H1 (cell line): ENCODE measurements at regions of chr10 and their contacts with region 1.

Region 1: GRCh38 chr10:95374597-95375209 is 83.9 kb upstream of the PDLIM1 start:
- DNase-seq: peak; percentile 56 to 85
- H3K4me3 ChIP-seq: no peak overlapping the region
- H3K27ac ChIP-seq: no peak overlapping the region
- H3K4me1 ChIP-seq: peaks cover 0 to 5% (median 4%) of the 10 kb centered on the region in 4 experiments; a peak in 4 of 7 replicates
- H3K27me3 ChIP-seq: no peaks in the 10 kb centered on the region
- CTCF ChIP-seq: peak; percentile 91 to 100 (median 100)
- EP300 ChIP-seq: no peak
- POLR2A ChIP-seq: no peak
- RAD21 ChIP-seq: peak; percentile 96 to 99

Region 2: DNA sequence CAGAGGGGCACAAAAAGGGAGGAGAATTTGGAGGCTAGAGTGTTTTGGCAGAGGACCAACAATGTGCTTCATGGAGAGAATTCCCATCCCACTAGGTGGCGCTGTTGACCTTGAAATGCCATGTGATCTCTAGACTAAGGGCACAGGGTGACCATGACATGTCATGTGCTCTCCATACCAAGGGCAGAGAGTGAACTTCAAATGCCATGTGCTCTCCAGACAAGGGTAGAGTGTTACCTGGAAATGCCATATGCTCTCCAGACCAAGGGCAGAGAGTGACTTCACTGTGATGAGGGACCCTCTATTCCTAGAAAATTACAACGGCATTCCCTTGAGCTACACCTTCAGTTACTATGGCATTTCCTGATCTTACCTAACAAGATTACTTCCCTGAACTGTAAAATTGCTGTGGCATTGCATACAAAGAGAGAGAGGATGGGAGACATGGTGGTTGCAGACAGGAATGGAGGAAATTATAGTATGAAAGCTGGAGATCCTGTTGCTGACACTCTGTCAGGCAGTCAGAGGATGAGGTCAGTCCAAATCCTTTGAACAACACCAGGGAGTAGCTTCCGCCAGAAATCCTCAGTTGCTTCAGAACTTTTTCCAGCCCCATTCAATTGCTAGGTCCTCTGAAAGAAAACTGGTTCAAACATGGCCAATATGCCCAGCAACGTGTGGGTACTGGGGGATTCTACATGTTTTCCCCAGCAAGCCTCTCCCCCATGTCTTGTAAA is 241.5 kb before region 1 on chr10:
- CTCF ChIA-PET with region 1: interaction called, 11 read pairs
- POLR2A ChIA-PET with region 1: no interaction called
- DNase-seq: peak; percentile 67 to 95
- H3K4me3 ChIP-seq: no peak overlapping the region
- H3K27ac ChIP-seq: no peak overlapping the region
- H3K4me1 ChIP-seq: no peaks in the 10 kb centered on the region
- H3K27me3 ChIP-seq: no peaks in the 10 kb centered on the region
- CTCF ChIP-seq: peak; percentile 59 to 98 (median 83)
- EP300 ChIP-seq: no peak
- POLR2A ChIP-seq: no peak
- RAD21 ChIP-seq: peak; percentile 98

Region 3: GRCh38 chr10:95363303-95363912 is 11.3 kb before region 1 on chr10:
- CTCF ChIA-PET with region 1: interaction called, 149 read pairs
- POLR2A ChIA-PET with region 1: no interaction called
- DNase-seq: no peak
- H3K4me3 ChIP-seq: no peak overlapping the region
- H3K27ac ChIP-seq: no peak overlapping the region
- H3K4me1 ChIP-seq: peaks cover 0 to 3% (median 0%) of the 10 kb centered on the region in 4 experiments; a peak in 2 of 7 replicates
- H3K27me3 ChIP-seq: no peaks in the 10 kb centered on the region
- CTCF ChIP-seq: peak in 2 of 3 experiments; percentile 73 to 82; a peak in 3 of 4 replicates
- EP300 ChIP-seq: no peak
- POLR2A ChIP-seq: no peak
- RAD21 ChIP-seq: peak; percentile 95 to 96

Region 4: GRCh38 chr10:95400787-95401186 is 26.1 kb after region 1 on chr10:
- CTCF ChIA-PET with region 1: interaction called, 162 read pairs
- POLR2A ChIA-PET with region 1: no interaction called
- DNase-seq: no peak
- H3K4me3 ChIP-seq: no peak overlapping the region
- H3K27ac ChIP-seq: no peak overlapping the region
- H3K4me1 ChIP-seq: no peaks in the 10 kb centered on the region
- H3K27me3 ChIP-seq: no peaks in the 10 kb centered on the region
- CTCF ChIP-seq: no peak
- EP300 ChIP-seq: no peak
- POLR2A ChIP-seq: no peak
- RAD21 ChIP-seq: no peak

Region 5: DNA sequence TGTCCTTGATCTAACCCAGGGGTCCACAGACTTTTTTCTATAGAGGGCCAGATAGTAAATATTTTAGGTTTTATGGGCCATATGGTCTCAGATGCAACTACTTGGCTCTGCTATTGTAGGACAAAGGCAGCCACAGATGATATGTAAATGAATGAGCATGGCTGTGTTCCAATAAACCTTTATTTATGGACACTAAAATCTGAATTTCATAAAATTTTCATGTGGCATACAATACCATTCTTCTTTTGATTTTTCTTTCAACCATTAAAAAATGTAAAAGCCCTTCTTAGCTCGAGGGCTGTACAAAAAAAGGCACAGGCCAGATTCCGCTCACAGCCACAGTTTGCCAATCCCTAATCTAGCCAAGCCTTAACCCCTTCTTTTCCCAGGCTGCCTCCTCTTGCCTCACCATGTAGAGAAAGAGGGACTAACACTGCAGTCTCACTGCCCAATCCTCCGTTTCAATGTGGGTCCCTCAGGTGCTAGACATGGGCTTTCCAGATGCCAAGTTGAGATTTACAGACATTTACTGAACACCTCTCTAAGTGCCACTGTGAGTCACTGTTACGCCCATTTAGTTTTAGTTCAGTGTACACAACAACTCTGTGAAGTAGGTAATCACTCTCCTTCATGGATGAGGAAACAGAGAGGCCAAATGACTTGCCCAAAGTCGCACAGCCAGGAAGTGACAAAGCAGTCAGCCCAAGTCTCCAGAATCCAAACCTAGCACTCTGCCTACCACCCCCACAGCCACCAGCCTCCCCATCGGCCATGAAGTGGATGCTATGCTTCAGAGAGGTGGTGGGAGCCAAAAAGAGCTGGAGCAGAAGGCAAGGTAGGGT is 48.7 kb after region 1 on chr10:
- CTCF ChIA-PET with region 1: interaction called, 32 read pairs
- POLR2A ChIA-PET with region 1: interaction called, 4 read pairs
- DNase-seq: no peak
- H3K4me3 ChIP-seq: no peak overlapping the region
- H3K27ac ChIP-seq: no peak overlapping the region
- H3K4me1 ChIP-seq: peaks cover 0 to 5% (median 0%) of the 10 kb centered on the region in 4 experiments; a peak in 1 of 7 replicates
- H3K27me3 ChIP-seq: no peaks in the 10 kb centered on the region
- CTCF ChIP-seq: no peak
- EP300 ChIP-seq: no peak
- POLR2A ChIP-seq: no peak
- RAD21 ChIP-seq: no peak

Region 6: GRCh38 chr10:95445837-95446486 is 71.3 kb after region 1 on chr10:
- CTCF ChIA-PET with region 1: interaction called, 20 read pairs
- POLR2A ChIA-PET with region 1: no interaction called
- DNase-seq: peak; percentile 53 to 70
- H3K4me3 ChIP-seq: no peak overlapping the region
- H3K27ac ChIP-seq: no peak overlapping the region
- H3K4me1 ChIP-seq: peaks cover 0 to 11% (median 1%) of the 10 kb centered on the region in 4 experiments; a peak in 4 of 7 replicates
- H3K27me3 ChIP-seq: no peaks in the 10 kb centered on the region
- CTCF ChIP-seq: peak; percentile 58 to 97 (median 75)
- EP300 ChIP-seq: no peak
- POLR2A ChIP-seq: no peak
- RAD21 ChIP-seq: peak; percentile 59 to 75